Colonic mucosa (tissue), 4 donors: ENCODE measurements at regions of chr1 and their contacts with region 1.

Region 1: GRCh38 chr1:84122780-84123382 is 21.2 kb upstream of the PRKACB start:
- DNase-seq: peak; percentile 64
- H3K4me3 ChIP-seq: no peak overlapping the region
- H3K27ac ChIP-seq: no peak overlapping the region
- H3K4me1 ChIP-seq: no peaks in the 10 kb centered on the region
- H3K27me3 ChIP-seq: no peaks in the 10 kb centered on the region
- CTCF ChIP-seq: peak; percentile 66

Region 2: GRCh38 chr1:83931658-83932253 is 191.1 kb before region 1 on chr1:
- intact Hi-C with region 1: loop called (anchors 2 kb)
- DNase-seq: peak; percentile 33
- H3K4me3 ChIP-seq: no peak overlapping the region
- H3K27ac ChIP-seq: no peak overlapping the region
- H3K4me1 ChIP-seq: no peaks in the 10 kb centered on the region
- H3K27me3 ChIP-seq: no peaks in the 10 kb centered on the region
- CTCF ChIP-seq: peak; percentile 57

Region 3: DNA sequence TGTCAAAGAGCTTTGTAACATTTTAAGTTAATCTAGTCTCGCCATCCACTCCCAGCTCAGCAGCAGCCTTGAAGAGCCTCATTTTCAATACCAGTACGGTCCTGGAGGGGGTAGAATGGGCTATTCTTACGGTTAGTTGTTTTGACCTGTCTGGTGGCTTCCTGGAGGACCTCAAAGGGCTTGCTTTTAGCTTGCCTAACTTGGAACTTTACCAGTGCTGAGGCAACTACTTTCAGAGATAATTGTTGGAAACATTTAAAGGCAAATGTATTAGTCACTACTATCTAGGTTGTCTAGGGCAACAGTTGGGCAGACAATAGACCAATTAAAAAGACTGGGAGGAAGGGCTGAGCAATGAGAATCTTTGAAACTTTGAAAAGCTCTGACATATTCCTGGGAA is 180.0 kb before region 1 on chr1:
- intact Hi-C with region 1: no loop called
- DNase-seq: no peak
- H3K4me3 ChIP-seq: no peak overlapping the region
- H3K27ac ChIP-seq: no peak overlapping the region
- H3K4me1 ChIP-seq: no peaks in the 10 kb centered on the region
- H3K27me3 ChIP-seq: no peaks in the 10 kb centered on the region
- CTCF ChIP-seq: no peak